ENCODE measurements at regions of chr9 and their contacts with region 1.

Region 1: DNA sequence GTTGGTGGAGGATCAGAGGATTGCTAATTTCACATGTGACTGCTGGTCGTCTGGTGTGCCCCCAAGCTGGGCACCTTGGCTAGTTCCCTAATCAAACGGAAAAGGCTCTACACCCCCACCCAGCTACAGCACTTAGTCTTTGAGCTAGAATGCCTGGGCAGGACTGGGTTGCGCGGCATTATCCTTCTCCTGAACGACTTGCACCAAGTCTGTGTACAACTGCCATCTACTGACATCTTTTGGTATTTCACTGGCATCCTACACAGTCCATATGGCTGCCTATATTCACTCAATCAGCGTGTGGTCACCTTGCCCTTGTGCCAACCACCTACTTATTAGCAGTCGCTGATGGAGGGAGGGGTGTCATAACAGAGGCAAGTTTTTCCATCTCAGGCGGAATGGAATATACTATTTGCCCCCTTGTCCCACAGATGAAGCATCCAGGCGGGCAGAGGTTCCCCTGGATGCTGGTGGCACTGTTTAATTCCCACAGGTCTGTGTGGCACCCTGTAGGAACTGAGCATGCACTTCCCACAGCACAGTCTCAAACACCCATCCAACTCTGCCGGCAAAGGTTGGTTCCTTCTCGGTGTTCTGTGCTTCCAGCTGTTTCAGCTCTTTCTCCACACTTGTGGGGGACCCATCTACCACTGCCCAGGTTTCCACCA is 150.1 kb downstream of the OSTF1 start:
- DNase-seq: peak; percentile 57
- H3K4me3 Mint-ChIP-seq: no peak overlapping the region
- H3K27ac Mint-ChIP-seq: no peak overlapping the region
- H3K4me1 Mint-ChIP-seq: no peaks in the 10 kb centered on the region
- H3K27me3 Mint-ChIP-seq: no peaks in the 10 kb centered on the region
- CTCF ChIP-seq: peak; percentile 54

Region 2: DNA sequence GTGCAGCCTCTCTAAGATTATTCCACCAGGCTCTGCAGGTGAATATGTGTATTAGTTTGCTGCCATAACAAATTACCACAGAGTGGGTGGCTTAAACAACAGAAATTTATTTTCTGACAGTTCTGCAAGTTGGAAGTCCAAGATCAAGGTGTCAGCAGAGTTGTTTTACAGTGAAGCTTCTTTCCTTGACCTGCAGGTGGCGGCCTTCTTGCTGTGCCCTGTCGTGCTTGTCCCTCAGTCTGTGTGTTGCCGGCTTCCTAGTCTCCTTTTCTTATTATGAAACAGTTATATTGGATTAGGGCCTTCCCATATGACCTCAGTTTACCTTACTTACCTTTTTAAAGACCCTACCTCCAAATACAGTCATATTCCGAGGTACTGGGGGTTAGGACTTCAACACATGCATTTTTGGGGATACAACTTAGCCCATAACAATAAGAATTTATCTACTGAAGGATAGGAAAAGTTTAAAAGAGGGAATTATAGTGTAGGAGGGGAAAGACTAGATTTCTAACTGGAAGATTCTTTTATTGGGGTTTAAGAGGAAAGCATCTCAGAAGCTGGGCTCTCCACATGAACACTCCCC is 52.8 kb before region 1 on chr9:
- CTCF ChIA-PET with region 1: interaction called, 3 read pairs
- intact Hi-C with region 1: loop called (anchors 10 kb)
- DNase-seq: peak; percentile 57
- H3K4me3 Mint-ChIP-seq: no peak overlapping the region
- H3K27ac Mint-ChIP-seq: no peak overlapping the region
- H3K4me1 Mint-ChIP-seq: no peaks in the 10 kb centered on the region
- H3K27me3 Mint-ChIP-seq: no peaks in the 10 kb centered on the region
- CTCF ChIP-seq: peak; percentile 27

Region 3: DNA sequence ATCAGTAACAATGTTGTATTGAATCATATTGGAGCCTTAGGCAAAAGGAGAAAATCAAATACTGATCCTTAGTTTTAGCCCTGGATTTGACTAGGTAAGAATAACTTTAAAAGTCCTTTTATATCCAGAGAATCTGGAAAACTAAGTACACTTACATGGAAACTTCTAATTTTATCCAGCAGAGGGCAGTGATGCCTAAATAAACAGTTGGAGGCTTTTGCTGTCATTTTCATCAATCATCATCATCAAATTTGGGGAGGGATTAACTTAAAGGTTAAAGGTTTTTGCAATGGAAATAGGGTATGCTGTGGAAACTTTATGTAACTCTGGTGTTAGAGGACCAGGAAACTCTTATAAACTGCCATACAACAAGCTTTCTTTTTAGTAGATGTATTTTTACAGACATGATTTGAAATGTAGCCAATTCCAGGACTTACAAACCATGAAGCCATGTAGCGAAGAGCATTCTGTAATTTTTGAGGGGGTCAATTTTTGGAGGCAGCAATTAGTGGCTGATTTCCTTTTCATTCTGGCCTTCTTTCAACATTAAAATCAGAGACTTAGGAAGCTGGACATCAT is 37.5 kb before region 1 on chr9:
- CTCF ChIA-PET with region 1: interaction called, 6 read pairs
- intact Hi-C with region 1: loop called (anchors 1 kb)
- DNase-seq: peak; percentile 6
- H3K4me3 Mint-ChIP-seq: no peak overlapping the region
- H3K27ac Mint-ChIP-seq: no peak overlapping the region
- H3K4me1 Mint-ChIP-seq: no peaks in the 10 kb centered on the region
- H3K27me3 Mint-ChIP-seq: peaks cover 8% of the 10 kb centered on the region
- CTCF ChIP-seq: peak; percentile 35

Region 4: GRCh38 chr9:75282047-75282446 is 43.6 kb after region 1 on chr9:
- CTCF ChIA-PET with region 1: no interaction called
- intact Hi-C with region 1: no loop called
- DNase-seq: no peak
- H3K4me3 Mint-ChIP-seq: no peak overlapping the region
- H3K27ac Mint-ChIP-seq: no peak overlapping the region
- H3K4me1 Mint-ChIP-seq: no peaks in the 10 kb centered on the region
- H3K27me3 Mint-ChIP-seq: no peaks in the 10 kb centered on the region
- CTCF ChIP-seq: no peak

Measured in Calu3 (cell line).